Ovary (tissue), 10 donors: ENCODE measurements at regions of chr3 and their contacts with region 1.

Region 1: DNA sequence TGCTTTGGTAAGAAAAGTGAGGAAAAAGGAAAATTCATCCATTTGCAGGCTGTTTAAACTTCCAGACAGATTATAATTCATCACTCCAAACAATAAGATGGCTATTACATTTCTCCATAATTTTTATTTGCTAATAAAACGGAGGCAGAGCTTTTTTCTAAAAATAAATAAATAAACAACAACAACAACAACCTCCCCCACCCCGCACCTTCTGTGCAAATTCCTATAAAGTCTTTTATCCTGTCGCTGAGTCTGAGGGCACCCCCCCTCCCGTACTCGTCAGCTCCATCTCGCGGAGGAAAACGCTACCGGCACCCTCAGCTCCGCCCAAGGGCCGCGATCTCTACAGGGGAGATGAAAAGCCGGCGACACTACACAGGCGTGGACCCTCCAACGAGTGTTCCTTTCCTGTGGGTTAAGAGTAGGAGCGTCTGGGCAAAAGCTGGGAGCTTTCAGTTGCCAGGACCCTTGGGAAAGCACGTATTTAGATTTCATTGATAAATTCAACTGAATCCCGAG is 1.0 kb upstream of the ATP1B3 start:
- DNase-seq: peak; percentile 77 to 86 (median 84)
- H3K4me3 ChIP-seq: peak overlapping the region; percentile 92
- H3K27ac ChIP-seq: peak overlapping the region; percentile 96 to 98
- H3K4me1 ChIP-seq: no peaks in the 10 kb centered on the region
- H3K27me3 ChIP-seq: no peaks in the 10 kb centered on the region
- CTCF ChIP-seq: peak; percentile 76 to 83 (median 77)
- EP300 ChIP-seq: no peak
- POLR2A ChIP-seq: no peak

Region 2: DNA sequence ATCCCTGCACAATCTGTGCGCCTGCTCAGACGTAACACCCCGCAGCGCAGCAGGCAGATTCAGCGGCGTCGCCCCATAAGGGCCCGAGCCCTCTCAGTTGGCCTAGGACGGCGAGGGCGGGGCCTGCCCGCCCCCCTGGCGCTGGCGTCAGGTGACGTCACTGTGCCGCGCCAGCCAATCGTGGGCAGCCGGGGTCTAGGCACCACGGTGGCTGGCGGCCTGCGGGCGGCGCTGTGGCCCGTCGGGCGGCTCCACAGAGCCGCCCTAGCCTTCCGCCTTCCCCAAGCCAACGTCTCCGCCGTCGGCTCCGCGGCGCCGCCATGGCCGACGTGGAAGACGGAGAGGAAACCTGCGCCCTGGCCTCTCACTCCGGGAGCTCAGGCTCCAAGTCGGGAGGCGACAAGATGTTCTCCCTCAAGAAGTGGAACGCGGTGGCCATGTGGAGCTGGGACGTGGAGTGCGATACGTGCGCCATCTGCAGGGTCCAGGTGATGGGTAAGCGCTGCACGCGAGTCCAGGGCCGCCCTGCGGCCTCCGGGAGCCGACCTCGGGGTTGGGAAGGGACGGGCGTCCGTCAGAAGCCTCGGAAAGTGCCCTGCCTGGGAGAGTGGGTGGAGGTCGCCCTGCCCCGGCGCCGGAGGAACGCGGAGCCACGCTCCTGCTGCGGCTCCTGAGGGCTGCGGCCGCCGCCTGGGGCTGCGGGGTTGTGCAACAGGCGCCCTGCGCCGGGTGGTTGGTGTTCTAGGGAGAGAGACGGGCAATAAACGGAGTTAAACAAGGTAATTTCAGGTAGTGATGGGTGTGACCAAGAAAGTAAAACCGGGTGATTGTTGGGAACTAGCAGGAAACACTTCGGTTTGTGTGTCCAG is 137.2 kb before region 1 on chr3 and contains the start of gene RNF7:
- intact Hi-C with region 1: loop called in 2 of 4 experiments (anchors 2 kb)
- DNase-seq: peak; percentile 93 to 98 (median 96)
- H3K4me3 ChIP-seq: peak within 1 kb of the TSS; percentile 99
- H3K27ac ChIP-seq: peak within 1 kb of the TSS; percentile 63 to 93
- H3K4me1 ChIP-seq: peaks cover 4% of the 10 kb centered on the region
- H3K27me3 ChIP-seq: no peaks in the 10 kb centered on the region
- CTCF ChIP-seq: peak; percentile 94 to 98 (median 96)
- EP300 ChIP-seq: peak; percentile 13
- POLR2A ChIP-seq: peak; percentile 77
- total RNA-seq, gene RNF7: 70.2 to 88.9 (median 78.5) TPM

Region 3: DNA sequence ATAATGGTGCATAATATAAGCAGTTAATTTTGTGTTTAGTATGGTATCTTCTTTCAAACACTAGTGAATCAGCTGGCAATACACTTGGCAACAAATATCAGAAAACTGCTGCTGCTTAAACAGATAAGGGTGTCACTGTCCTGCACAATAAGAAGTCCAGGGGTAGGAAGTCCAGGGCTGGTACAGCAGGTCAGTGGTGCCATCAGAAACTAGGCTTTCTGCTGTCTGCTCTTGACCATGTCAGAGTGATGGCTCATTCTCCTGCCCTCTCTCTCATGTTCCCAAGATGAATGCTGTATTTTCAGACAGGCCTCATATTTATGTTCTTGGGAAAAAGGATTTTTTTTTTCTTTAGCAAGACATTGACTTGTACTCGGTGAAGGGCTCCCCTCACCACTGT is 121.4 kb before region 1 on chr3:
- intact Hi-C with region 1: no loop called
- DNase-seq: no peak
- H3K4me3 ChIP-seq: no peak overlapping the region
- H3K27ac ChIP-seq: no peak overlapping the region
- H3K4me1 ChIP-seq: no peaks in the 10 kb centered on the region
- H3K27me3 ChIP-seq: no peaks in the 10 kb centered on the region
- CTCF ChIP-seq: no peak
- EP300 ChIP-seq: no peak
- POLR2A ChIP-seq: no peak

Region 4: GRCh38 chr3:141816958-141817357 is 58.5 kb before region 1 on chr3:
- intact Hi-C with region 1: no loop called
- DNase-seq: no peak
- H3K4me3 ChIP-seq: no peak overlapping the region
- H3K27ac ChIP-seq: no peak overlapping the region
- H3K4me1 ChIP-seq: no peaks in the 10 kb centered on the region
- H3K27me3 ChIP-seq: no peaks in the 10 kb centered on the region
- CTCF ChIP-seq: no peak
- EP300 ChIP-seq: no peak
- POLR2A ChIP-seq: no peak